Activated CD4-positive, alpha-beta T cell treated with anti-CD3 and anti-CD28 coated beads, Interleukin-2, amount 10 ng/mL, durations not matched to agents 24 days and 14 days (primary cell): ENCODE measurements at regions of chr7 and their contacts with region 1.

Region 1: DNA sequence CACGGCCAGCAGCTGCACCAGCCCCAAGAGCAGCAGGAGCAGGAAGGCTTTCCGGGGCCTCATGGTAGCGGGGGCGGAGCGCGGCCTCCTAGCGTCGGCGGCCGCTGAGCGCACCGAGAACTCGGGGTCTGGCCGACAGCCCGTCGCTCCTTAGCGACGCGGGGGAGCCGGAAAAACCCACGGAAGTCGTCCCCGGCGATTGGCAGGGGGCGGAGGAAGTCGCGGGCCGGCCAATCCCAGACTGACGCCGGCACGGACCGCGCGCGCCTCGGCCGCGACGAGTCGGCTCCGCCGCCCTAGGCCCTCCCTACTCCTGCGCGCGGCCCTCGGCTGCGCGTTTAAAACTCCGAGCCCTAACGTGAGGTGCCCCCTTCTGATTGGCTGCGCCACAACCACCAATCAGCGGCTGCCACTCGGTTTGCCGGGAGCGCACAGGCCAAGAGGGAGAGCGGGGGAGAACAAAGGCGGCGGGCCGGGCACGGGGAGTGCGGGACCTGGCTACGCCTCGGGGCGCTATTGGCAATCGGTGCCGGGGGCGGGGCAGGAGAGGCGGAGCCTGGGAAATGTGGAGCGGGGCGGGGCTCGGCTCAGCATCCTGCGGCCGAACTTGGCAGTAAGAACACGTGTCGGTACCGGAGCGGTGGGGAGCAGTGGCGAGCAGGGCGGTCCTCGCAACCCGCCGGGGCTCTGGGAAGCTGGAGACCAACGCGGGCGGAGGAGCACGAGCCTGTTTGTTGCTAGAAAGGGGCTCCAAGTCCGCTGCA is at the start of gene PDIA4:
- DNase-seq: peak; percentile 100
- H3K4me3 Mint-ChIP-seq: peak within 1 kb of the TSS; percentile 99
- H3K27ac Mint-ChIP-seq: peak within 1 kb of the TSS; percentile 95
- H3K4me1 Mint-ChIP-seq: peaks cover 33% of the 10 kb centered on the region
- H3K27me3 Mint-ChIP-seq: peaks cover 6% of the 10 kb centered on the region
- total RNA-seq, gene PDIA4: 137 and 138 TPM in 2 replicates

Region 2: DNA sequence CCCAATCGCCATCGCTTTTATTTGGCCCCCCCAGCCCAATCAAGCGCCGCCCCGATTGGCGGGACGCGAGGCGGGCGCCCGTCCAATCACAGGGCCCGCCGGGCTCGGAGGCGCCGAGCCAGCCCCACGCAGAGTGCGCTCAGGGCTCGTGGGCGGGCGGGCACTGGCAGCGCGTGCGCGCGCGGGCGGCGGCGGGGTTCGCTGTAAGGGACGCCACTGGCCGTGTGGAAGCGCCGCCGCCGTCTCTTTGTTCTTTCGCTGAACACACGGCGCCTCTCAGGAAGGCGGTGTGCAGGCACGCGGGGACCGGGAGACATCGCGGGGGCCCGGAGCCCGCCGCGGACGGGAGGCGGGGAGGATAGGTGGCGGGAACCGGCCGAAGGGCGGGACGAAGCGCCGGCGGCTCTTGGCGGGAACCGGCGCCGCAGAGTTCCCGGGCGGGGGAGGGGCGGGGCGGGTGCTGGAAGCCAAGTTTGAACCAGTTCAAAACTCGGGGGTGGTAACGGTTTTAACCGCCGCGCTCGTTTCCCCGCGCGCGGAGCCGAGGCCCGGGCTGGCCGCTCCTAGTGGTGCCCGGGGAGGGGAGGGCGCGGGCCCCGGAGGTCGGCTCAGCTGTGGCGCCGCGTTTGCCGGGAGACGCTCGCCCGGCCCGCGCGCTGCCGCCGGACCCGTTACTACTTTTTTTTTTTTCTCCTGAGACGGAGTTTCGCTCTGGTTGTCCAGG is 144.1 kb before region 1 on chr7:
- intact Hi-C with region 1: loop called (anchors 2 kb)
- DNase-seq: peak; percentile 99
- H3K4me3 Mint-ChIP-seq: peak overlapping the region; percentile 93
- H3K27ac Mint-ChIP-seq: peak overlapping the region; percentile 99
- H3K4me1 Mint-ChIP-seq: peaks cover 26% of the 10 kb centered on the region
- H3K27me3 Mint-ChIP-seq: no peaks in the 10 kb centered on the region

Region 3: DNA sequence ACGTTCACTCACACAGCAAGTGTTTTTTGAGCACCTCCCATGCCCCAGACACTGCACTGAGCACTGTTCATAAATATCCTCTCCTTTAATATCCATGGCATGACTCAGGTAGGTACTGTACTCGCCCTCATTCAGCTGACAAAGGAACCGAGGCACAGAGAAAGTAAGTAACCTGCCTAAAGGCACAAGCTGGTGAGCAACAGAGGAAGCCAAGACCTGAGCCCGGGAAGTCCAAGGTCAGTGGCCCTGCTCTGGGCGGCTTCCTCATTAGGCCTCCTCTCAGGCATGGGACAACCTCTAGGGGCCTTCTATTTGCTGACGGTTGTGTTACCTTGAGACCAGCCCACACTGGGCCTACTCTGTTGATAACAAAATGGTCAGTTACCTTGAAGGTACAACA is 99.4 kb before region 1 on chr7:
- intact Hi-C with region 1: no loop called
- DNase-seq: no peak
- H3K4me3 Mint-ChIP-seq: no peak overlapping the region
- H3K27ac Mint-ChIP-seq: peak overlapping the region; percentile 63
- H3K4me1 Mint-ChIP-seq: peaks cover 33% of the 10 kb centered on the region
- H3K27me3 Mint-ChIP-seq: no peaks in the 10 kb centered on the region

Region 4: GRCh38 chr7:149067876-149068275 is 39.3 kb after region 1 on chr7:
- intact Hi-C with region 1: loop called (anchors 1 kb)
- DNase-seq: no peak
- H3K4me3 Mint-ChIP-seq: no peak overlapping the region
- H3K27ac Mint-ChIP-seq: no peak overlapping the region
- H3K4me1 Mint-ChIP-seq: peaks cover 9% of the 10 kb centered on the region
- H3K27me3 Mint-ChIP-seq: no peaks in the 10 kb centered on the region

Region 5: GRCh38 chr7:149195180-149196150 is 166.9 kb after region 1 on chr7 and contains the start of gene ZNF282:
- intact Hi-C with region 1: loop called (anchors 5 kb)
- DNase-seq: peak; percentile 94
- H3K4me3 Mint-ChIP-seq: peak within 1 kb of the TSS; percentile 96
- H3K27ac Mint-ChIP-seq: peak within 1 kb of the TSS; percentile 96
- H3K4me1 Mint-ChIP-seq: peaks cover 38% of the 10 kb centered on the region
- H3K27me3 Mint-ChIP-seq: peaks cover 4% of the 10 kb centered on the region
- total RNA-seq, gene ZNF282: 44.7 and 49.9 TPM in 2 replicates

Region 6: GRCh38 chr7:149497456-149498261 is 469.1 kb after region 1 on chr7 and contains the start of gene ZNF746:
- intact Hi-C with region 1: loop called (anchors 5 kb)
- DNase-seq: peak; percentile 95
- H3K4me3 Mint-ChIP-seq: peak within 1 kb of the TSS; percentile 97
- H3K27ac Mint-ChIP-seq: peak within 1 kb of the TSS; percentile 96
- H3K4me1 Mint-ChIP-seq: peaks cover 19% of the 10 kb centered on the region
- H3K27me3 Mint-ChIP-seq: peaks cover 2% of the 10 kb centered on the region
- total RNA-seq, gene ZNF746: 23.3 and 24.8 TPM in 2 replicates